ENCODE measurements at regions of chr2 and their contacts with region 1.

Region 1: DNA sequence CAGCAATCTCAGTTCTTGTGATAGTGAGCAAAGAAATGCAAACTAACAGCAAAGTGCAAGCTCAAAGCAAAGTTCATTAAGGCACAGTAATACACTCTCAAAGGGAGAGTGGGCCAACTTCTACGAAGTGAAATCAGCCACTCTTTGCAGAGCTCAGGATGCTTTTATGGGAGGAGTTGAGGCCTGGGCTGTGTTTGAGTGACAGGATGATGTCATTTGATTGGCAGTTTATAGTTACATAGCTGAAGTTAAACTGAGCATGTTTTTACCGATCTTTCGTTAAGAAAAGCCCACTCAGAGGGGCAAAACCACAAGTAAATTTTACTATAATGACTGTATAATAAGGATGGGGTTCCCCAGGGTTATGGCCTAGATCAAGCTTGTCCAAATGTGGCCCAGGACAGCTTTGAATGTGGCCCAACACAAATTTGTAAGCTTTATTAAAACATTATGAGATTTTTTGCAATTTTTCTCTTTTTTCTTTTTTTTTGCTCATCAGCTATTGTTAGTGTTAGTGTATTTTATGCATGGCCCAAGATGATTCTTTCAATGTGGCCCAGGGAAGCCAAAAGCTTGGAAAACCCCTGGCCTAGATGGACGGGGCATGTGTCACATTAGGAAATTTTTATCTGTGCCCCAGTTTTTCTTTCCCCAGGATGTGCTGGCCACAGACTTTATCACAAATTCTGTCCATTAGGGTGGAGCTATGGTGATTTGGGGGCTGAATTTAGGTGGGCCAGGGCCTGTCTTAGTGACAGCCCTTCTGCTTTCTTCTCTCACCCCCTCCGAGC is 8.3 kb upstream of the DNAH7 start:
- DNase-seq: no peak
- H3K4me3 Mint-ChIP-seq: no peak overlapping the region
- H3K27ac Mint-ChIP-seq: no peak overlapping the region
- H3K4me1 Mint-ChIP-seq: peaks cover 25% of the 10 kb centered on the region
- H3K27me3 Mint-ChIP-seq: no peaks in the 10 kb centered on the region

Region 2: GRCh38 chr2:196131384-196131937 is 54.5 kb after region 1 on chr2:
- CTCF ChIA-PET with region 1: interaction called, 15 read pairs
- intact Hi-C with region 1: loop called (anchors 2 kb)
- DNase-seq: peak; percentile 70
- H3K4me3 Mint-ChIP-seq: no peak overlapping the region
- H3K27ac Mint-ChIP-seq: peak overlapping the region; percentile 70
- H3K4me1 Mint-ChIP-seq: peaks cover 12% of the 10 kb centered on the region
- H3K27me3 Mint-ChIP-seq: no peaks in the 10 kb centered on the region

Region 3: GRCh38 chr2:196220671-196221070 is 143.7 kb after region 1 on chr2:
- CTCF ChIA-PET with region 1: interaction called, 52 read pairs
- intact Hi-C with region 1: loop called (anchors 1 kb)
- DNase-seq: peak; percentile 55
- H3K4me3 Mint-ChIP-seq: peak overlapping the region; percentile 13
- H3K27ac Mint-ChIP-seq: peak overlapping the region; percentile 0
- H3K4me1 Mint-ChIP-seq: peaks cover 81% of the 10 kb centered on the region
- H3K27me3 Mint-ChIP-seq: no peaks in the 10 kb centered on the region

Region 4: GRCh38 chr2:196291873-196292800 is 215.2 kb after region 1 on chr2:
- CTCF ChIA-PET with region 1: interaction called, 23 read pairs
- intact Hi-C with region 1: no loop called
- DNase-seq: no peak
- H3K4me3 Mint-ChIP-seq: no peak overlapping the region
- H3K27ac Mint-ChIP-seq: no peak overlapping the region
- H3K4me1 Mint-ChIP-seq: peaks cover 46% of the 10 kb centered on the region
- H3K27me3 Mint-ChIP-seq: no peaks in the 10 kb centered on the region

Region 5: GRCh38 chr2:196337208-196337953 is 260.4 kb after region 1 on chr2:
- CTCF ChIA-PET with region 1: interaction called, 198 read pairs
- intact Hi-C with region 1: loop called (anchors 1 kb)
- DNase-seq: peak; percentile 37
- H3K4me3 Mint-ChIP-seq: no peak overlapping the region
- H3K27ac Mint-ChIP-seq: no peak overlapping the region
- H3K4me1 Mint-ChIP-seq: peaks cover 8% of the 10 kb centered on the region
- H3K27me3 Mint-ChIP-seq: no peaks in the 10 kb centered on the region

Region 6: GRCh38 chr2:196750982-196751635 is 674.1 kb after region 1 on chr2:
- CTCF ChIA-PET with region 1: no interaction called
- intact Hi-C with region 1: loop called (anchors 5 kb)
- DNase-seq: peak; percentile 83
- H3K4me3 Mint-ChIP-seq: no peak overlapping the region
- H3K27ac Mint-ChIP-seq: no peak overlapping the region
- H3K4me1 Mint-ChIP-seq: peaks cover 9% of the 10 kb centered on the region
- H3K27me3 Mint-ChIP-seq: no peaks in the 10 kb centered on the region

Measured in activated naive CD4-positive, alpha-beta T cell treated with anti-CD3 and anti-CD28 coated beads for 36 hours (primary cell).